GM12878 (cell line): ENCODE measurements at regions of chr6 and their contacts with region 1.

Region 1: GRCh38 chr6:157314705-157315321 is 8.5 kb downstream of the TMEM242 start:
- DNase-seq: peak; percentile 42
- ATAC-seq: peak; percentile 96
- H3K4me3 ChIP-seq: no peak overlapping the region
- H3K27ac ChIP-seq: no peak overlapping the region
- H3K4me1 ChIP-seq: no peaks in the 10 kb centered on the region
- H3K27me3 ChIP-seq: no peaks in the 10 kb centered on the region
- CTCF ChIP-seq: peak; percentile 80 to 100 (median 91); a peak in 5 of 6 replicates
- EP300 ChIP-seq: no peak
- POLR2A ChIP-seq: no peak
- RAD21 ChIP-seq: peak; percentile 99

Region 2: GRCh38 chr6:157158897-157159296 is 155.9 kb before region 1 on chr6:
- CTCF ChIA-PET with region 1: no interaction called
- POLR2A ChIA-PET with region 1: no interaction called
- RAD21 ChIA-PET with region 1: no interaction called
- SMC1A ChIA-PET with region 1: no interaction called
- in situ Hi-C with region 1: no loop called
- intact Hi-C with region 1: no loop called
- DNase-seq: no peak
- ATAC-seq: no peak
- H3K4me3 ChIP-seq: no peak overlapping the region
- H3K27ac ChIP-seq: no peak overlapping the region
- H3K4me1 ChIP-seq: no peaks in the 10 kb centered on the region
- H3K27me3 ChIP-seq: no peaks in the 10 kb centered on the region
- CTCF ChIP-seq: no peak
- EP300 ChIP-seq: no peak
- POLR2A ChIP-seq: no peak
- RAD21 ChIP-seq: no peak

Region 3: DNA sequence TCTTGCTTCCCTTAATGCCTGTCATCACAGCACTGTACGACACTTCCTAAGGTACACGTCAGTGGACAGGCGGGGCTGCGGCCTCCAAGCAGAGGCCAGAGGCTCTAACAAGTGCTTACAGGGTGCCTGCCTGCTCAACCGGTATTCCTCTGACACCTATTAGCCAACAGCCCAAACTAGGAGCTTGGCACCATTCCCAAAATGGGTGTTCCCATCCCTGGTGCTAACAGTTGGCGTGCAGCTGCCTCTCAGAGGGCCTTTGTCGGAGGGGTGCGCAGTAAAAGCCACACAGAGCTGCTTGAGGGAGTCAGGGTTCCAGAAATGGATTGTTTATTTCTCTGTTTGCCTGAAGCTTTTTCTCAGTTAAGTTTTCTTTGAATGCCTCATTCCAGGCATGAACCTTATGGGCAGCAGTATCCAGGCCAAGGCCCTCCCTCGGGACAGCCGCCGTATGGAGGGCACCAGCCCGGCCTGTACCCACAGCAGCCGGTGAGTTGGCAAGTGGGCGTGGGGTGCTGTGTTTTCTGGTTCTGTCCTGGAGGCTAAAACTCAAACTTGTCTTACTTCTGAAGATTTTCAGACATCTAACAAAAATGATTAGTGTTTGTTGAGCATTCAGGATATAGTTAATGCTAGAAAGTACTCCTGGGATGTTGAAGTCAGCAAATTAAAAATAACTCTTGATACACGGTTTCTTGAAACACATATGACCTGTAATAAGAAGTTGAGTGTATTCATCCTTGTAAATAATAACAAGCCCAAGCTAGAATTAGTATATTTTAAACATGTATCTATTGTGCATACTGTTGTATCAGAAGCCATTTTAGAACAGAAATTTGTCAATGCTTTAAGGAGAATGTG is 116.2 kb before region 1 on chr6:
- CTCF ChIA-PET with region 1: no interaction called
- POLR2A ChIA-PET with region 1: no interaction called
- RAD21 ChIA-PET with region 1: no interaction called
- SMC1A ChIA-PET with region 1: no interaction called
- in situ Hi-C with region 1: no loop called
- intact Hi-C with region 1: no loop called
- DNase-seq: no peak
- ATAC-seq: no peak
- H3K4me3 ChIP-seq: no peak overlapping the region
- H3K27ac ChIP-seq: no peak overlapping the region
- H3K4me1 ChIP-seq: peaks cover 7% of the 10 kb centered on the region
- H3K27me3 ChIP-seq: no peaks in the 10 kb centered on the region
- CTCF ChIP-seq: no peak
- EP300 ChIP-seq: no peak
- POLR2A ChIP-seq: no peak
- RAD21 ChIP-seq: no peak

Region 4: GRCh38 chr6:157379656-157380454 is 65.0 kb after region 1 on chr6:
- CTCF ChIA-PET with region 1: interaction called, 12 read pairs
- POLR2A ChIA-PET with region 1: interaction called, 4 read pairs
- RAD21 ChIA-PET with region 1: interaction called, 5 read pairs
- SMC1A ChIA-PET with region 1: interaction called, 9 read pairs
- in situ Hi-C with region 1: no loop called
- intact Hi-C with region 1: loop called (anchors 2 kb)
- DNase-seq: peak; percentile 65
- ATAC-seq: peak; percentile 86
- H3K4me3 ChIP-seq: peak overlapping the region; percentile 98
- H3K27ac ChIP-seq: peak overlapping the region; percentile 50; the same call in 1 of the 2 replicates
- H3K4me1 ChIP-seq: no peaks in the 10 kb centered on the region
- H3K27me3 ChIP-seq: peaks cover 0 to 4% of the 10 kb centered on the region in 2 experiments; a peak in 1 of 4 replicates
- CTCF ChIP-seq: no peak
- EP300 ChIP-seq: no peak
- POLR2A ChIP-seq: 0 out of 2 replicates have a peak, but pooled peaks have one; percentile 42
- RAD21 ChIP-seq: no peak

Region 5: GRCh38 chr6:157597446-157598312 is 282.9 kb after region 1 on chr6:
- CTCF ChIA-PET with region 1: interaction called, 16 read pairs
- POLR2A ChIA-PET with region 1: no interaction called
- RAD21 ChIA-PET with region 1: interaction called, 20 read pairs
- SMC1A ChIA-PET with region 1: interaction called, 13 read pairs
- in situ Hi-C with region 1: loop called (anchors 10 kb)
- intact Hi-C with region 1: loop called (anchors 5 kb)
- DNase-seq: no peak
- ATAC-seq: peak; percentile 91
- H3K4me3 ChIP-seq: no peak overlapping the region
- H3K27ac ChIP-seq: no peak overlapping the region
- H3K4me1 ChIP-seq: no peaks in the 10 kb centered on the region; the same call in 1 of the 2 replicates
- H3K27me3 ChIP-seq: no peaks in the 10 kb centered on the region
- CTCF ChIP-seq: peak; percentile 51 to 72 (median 56); a peak in 5 of 6 replicates
- EP300 ChIP-seq: no peak
- POLR2A ChIP-seq: no peak
- RAD21 ChIP-seq: peak; percentile 75

Region 6: DNA sequence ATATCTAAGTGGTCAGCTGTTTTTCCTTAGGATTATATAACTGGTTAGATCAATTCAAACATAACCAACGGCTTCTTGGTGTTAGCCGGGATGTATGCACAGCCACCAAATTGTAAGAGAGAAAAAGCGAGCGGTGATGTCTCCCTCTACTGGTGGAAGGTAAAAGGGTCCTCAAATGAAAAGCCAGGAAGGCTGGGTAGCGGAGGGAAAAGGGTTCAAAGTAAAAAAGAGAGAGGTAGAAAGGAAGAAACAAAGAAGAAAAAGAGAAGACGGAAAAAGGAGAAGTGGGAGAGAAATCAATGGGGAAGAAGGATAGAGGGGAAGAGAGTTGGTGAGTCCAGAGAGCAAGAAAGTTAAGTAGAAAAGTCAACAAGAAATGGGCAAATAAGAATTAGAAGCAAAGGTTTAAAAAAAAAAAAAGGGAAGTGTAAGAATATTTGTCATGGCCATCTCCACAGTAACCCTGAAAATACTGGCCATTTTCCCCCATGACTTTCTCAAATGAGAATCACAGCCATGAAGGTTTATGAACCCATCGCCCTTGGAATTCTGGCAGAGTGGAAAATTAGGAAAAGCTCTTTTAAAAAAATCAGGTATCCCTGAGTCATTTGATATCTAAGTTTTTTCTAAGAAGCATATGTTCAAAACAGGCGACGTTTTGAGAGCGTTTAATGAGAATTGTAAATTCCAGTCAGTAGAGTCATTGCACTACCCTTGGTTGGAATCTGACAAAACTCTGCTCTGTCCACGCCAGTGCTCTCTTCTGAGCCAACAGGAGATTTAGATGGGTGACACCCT is 352.6 kb after region 1 on chr6:
- CTCF ChIA-PET with region 1: interaction called, 96 read pairs
- POLR2A ChIA-PET with region 1: interaction called, 5 read pairs
- RAD21 ChIA-PET with region 1: interaction called, 47 read pairs
- SMC1A ChIA-PET with region 1: interaction called, 74 read pairs
- in situ Hi-C with region 1: loop called (anchors 5 kb)
- intact Hi-C with region 1: loop called (anchors 1 kb)
- DNase-seq: peak; percentile 36
- ATAC-seq: peak; percentile 94
- H3K4me3 ChIP-seq: no peak overlapping the region
- H3K27ac ChIP-seq: no peak overlapping the region
- H3K4me1 ChIP-seq: no peaks in the 10 kb centered on the region
- H3K27me3 ChIP-seq: 0 out of 4 replicates have a peak, but pooled peaks cover 0 to 2% of the 10 kb centered on the region in 2 experiments
- CTCF ChIP-seq: peak; percentile 74 to 81 (median 79)
- EP300 ChIP-seq: no peak
- POLR2A ChIP-seq: no peak
- RAD21 ChIP-seq: peak; percentile 95

Region 7: DNA sequence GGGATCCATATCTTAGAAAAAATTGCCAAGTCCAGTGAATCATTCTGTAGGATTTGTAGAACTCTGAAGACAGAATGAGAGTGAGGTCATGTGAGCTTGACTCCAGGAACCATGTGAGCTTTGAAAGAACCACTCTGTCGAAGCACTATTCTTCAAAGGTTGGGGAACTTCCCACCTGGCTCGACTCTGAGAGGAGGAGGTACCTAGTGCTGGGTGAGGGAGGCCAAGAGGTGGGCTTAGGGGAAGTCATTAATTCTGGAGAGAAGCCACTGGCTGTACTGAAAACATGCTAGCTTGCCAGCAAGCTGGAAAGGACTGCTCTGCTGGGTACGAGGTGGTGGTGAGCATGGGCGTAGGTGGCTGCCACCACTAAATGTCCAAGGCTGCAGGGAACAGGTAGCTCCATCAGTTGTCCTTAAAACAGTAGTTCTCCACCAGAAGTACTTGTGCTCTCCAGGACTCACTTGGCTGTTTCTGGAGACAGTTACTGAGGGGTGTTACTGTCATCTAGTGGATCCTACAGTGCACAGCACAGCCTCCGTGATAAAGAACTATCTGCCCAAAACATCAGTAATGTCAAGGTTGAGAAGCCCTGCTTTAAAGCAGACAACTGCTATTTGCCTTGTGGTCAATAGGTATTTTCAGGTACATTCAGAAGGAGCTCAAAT is 632.2 kb after region 1 on chr6:
- CTCF ChIA-PET with region 1: interaction called, 4 read pairs
- POLR2A ChIA-PET with region 1: no interaction called
- RAD21 ChIA-PET with region 1: interaction called, 5 read pairs
- SMC1A ChIA-PET with region 1: interaction called, 3 read pairs
- in situ Hi-C with region 1: no loop called
- intact Hi-C with region 1: loop called (anchors 1 kb)
- DNase-seq: peak; percentile 9
- ATAC-seq: peak; percentile 93
- H3K4me3 ChIP-seq: no peak overlapping the region
- H3K27ac ChIP-seq: no peak overlapping the region
- H3K4me1 ChIP-seq: no peaks in the 10 kb centered on the region
- H3K27me3 ChIP-seq: no peaks in the 10 kb centered on the region
- CTCF ChIP-seq: peak; percentile 80 to 89 (median 87)
- EP300 ChIP-seq: no peak
- POLR2A ChIP-seq: no peak
- RAD21 ChIP-seq: peak; percentile 89